ENCODE measurements at regions of chr1 and their contacts with region 1.

Region 1: DNA sequence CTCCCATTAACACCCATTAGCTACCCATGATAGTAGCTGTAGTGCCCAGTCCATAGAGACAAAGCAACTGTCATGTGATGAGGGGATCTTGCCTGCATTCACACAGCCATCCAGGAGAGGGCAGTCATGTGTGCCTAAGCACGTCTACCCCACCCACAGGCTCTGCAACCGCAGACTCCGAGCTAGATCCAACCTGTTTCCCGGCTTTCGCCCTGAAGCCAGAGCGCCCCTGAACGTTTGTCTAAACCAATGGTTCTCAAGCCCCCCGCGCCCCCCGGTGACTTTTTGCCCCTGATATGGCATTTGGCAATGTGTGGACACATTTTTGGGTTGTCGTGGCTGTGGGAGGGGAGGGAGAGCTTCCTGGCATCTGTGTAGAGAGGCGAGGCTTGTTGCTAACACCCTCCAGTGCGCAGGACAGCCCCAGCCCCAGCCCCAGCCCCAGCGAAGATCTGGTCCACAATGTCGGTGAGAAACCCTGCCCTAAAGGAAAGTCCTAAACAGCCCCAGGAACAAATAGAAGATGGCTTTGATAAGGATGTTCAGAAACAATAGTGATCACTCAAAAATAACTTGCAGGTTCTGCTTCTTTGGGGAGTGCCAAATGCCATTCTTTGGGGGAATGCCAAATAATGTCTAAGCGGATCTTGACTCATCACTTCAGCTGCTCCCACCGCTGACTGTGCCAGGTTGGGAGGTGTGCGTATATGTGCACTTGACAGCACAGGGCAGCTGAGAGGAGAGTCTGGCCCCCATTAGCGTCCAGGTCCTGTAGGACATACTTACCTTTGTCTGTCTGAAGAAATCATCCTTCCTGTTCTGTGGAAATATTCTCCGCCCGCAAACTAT is 34.5 kb downstream of the SLC44A3 start:
- DNase-seq: peak in 1 of 2 donors; percentile 96
- H3K4me3 ChIP-seq: peak overlapping the region; percentile 41 to 57
- H3K27ac ChIP-seq: peak overlapping the region; percentile 85
- H3K4me1 ChIP-seq: peaks cover 14% of the 10 kb centered on the region
- H3K27me3 ChIP-seq: no peaks in the 10 kb centered on the region
- CTCF ChIP-seq: peak; percentile 73 to 98 (median 97)
- POLR2A ChIP-seq: no peak

Region 2: DNA sequence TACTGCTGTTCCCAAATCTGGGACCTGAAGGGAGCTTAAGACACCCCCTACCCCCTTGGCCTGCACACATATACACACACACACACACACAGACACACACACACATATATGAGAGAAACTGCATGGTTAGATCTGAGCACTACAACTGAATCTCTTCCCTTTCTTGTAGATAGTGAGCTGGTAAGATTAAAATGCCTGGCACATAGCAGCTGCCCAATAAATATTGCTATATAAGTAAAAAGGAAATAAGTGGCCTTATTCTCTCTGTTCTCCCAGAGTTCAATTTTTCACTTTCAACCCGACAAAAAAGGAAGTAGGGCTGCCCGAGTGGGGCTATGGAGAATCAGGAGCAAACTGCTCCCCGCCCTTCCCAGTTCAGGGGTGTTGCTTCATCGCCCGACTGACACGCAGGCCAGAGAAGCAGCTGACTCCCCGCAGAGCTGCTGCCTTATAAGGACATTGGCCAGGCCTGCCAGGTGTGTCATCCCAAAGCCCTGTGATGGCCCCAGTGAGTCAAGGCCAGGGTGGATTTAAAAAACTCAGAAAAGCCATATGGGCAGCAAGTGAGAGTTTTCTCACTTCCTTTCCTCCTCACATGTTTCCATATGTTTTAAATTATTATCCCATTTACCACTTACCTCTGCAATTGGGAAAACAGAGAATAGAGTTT is 141.1 kb before region 1 on chr1:
- intact Hi-C with region 1: no loop called
- DNase-seq: peak in 1 of 2 donors; percentile 99
- H3K4me3 ChIP-seq: no peak overlapping the region
- H3K27ac ChIP-seq: peak overlapping the region; percentile 76
- H3K4me1 ChIP-seq: peaks cover 6% of the 10 kb centered on the region
- H3K27me3 ChIP-seq: no peaks in the 10 kb centered on the region
- CTCF ChIP-seq: no peak
- POLR2A ChIP-seq: no peak

Region 3: DNA sequence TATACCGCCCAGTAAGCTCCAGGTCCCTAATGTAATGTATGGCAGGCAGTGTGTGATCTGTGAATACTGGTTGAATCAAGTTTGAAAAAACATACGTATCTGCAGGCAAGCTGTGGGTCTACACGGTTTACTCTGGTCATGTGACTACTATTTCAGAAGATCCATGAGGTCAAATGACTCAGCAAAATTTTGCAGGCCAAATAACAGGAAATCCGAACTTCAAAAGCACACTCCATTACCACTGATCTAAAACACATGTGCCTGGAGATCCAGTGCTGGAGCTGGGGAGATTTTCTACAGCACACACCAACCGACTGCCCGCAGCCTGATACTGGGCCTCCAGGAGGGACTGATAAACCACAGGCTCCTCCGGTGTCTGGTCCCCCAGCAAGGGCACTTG is 99.0 kb before region 1 on chr1:
- intact Hi-C with region 1: no loop called
- DNase-seq: no peak
- H3K4me3 ChIP-seq: no peak overlapping the region
- H3K27ac ChIP-seq: peak overlapping the region; percentile 41
- H3K4me1 ChIP-seq: peaks cover 19% of the 10 kb centered on the region
- H3K27me3 ChIP-seq: no peaks in the 10 kb centered on the region
- CTCF ChIP-seq: no peak
- POLR2A ChIP-seq: no peak

Region 4: GRCh38 chr1:95043141-95043980 is 188.7 kb after region 1 on chr1:
- intact Hi-C with region 1: loop called (anchors 2 kb)
- DNase-seq: peak in 1 of 2 donors; percentile 91
- H3K4me3 ChIP-seq: no peak overlapping the region
- H3K27ac ChIP-seq: peak overlapping the region; percentile 77
- H3K4me1 ChIP-seq: peaks cover 15% of the 10 kb centered on the region
- H3K27me3 ChIP-seq: no peaks in the 10 kb centered on the region
- CTCF ChIP-seq: peak; percentile 91 to 100 (median 91)
- POLR2A ChIP-seq: no peak

Measured in vagina (tissue), 2 donors.